Right ventricle myocardium inferior (tissue), 1 donor: ENCODE measurements at regions of chr17 and their contacts with region 1.

Region 1: DNA sequence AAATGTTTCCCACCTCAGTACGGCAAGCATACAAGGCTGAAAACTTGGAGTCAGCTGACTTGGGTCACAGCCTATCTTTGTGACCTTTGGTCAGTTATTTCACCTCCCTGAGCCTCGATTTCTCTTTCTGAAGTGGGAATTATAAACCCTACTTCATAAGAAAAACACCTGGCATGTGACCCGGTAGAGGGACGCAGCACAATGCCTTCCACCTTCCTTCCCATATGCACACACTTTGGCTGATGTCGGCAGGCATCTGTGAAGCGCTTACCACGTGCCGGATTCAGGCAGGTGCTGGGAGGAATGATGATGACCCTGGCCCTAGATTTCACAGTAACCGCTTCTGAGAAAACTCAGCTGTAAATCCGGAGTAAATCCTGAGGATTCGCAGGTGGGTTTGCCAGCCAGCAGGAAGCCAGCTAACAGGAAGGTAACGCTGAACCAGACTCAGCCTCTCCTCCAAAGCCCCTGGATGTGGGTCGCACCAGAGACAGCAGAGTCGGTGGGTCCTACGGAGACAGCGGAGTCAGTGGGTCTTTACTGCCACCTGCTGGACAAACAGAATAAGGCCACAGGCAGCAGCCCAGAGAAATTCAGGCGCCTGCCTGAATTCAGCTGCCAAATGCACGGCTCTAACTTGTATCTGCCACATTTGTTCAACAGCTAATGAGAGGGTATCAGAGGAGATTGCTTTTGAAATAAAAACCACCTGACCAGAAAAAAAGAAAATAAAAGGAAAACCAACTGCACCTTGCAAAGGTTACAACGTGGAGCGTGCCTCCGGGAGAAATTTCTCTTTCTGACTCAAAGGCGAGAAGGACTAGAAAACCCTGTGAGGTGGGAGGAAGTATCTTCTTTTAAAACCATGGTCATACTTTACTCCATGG is 16.6 kb downstream of the COPRS start:
- DNase-seq: peak; percentile 72
- ATAC-seq: peak; percentile 92

Region 2: GRCh38 chr17:31437720-31438420 is 404.6 kb before region 1 on chr17:
- intact Hi-C with region 1: loop called (anchors 5 kb)
- DNase-seq: no peak
- ATAC-seq: no peak

Region 3: GRCh38 chr17:31549525-31550388 is 292.7 kb before region 1 on chr17:
- intact Hi-C with region 1: loop called (anchors 2 kb)
- DNase-seq: peak; percentile 94
- ATAC-seq: peak; percentile 94

Region 4: DNA sequence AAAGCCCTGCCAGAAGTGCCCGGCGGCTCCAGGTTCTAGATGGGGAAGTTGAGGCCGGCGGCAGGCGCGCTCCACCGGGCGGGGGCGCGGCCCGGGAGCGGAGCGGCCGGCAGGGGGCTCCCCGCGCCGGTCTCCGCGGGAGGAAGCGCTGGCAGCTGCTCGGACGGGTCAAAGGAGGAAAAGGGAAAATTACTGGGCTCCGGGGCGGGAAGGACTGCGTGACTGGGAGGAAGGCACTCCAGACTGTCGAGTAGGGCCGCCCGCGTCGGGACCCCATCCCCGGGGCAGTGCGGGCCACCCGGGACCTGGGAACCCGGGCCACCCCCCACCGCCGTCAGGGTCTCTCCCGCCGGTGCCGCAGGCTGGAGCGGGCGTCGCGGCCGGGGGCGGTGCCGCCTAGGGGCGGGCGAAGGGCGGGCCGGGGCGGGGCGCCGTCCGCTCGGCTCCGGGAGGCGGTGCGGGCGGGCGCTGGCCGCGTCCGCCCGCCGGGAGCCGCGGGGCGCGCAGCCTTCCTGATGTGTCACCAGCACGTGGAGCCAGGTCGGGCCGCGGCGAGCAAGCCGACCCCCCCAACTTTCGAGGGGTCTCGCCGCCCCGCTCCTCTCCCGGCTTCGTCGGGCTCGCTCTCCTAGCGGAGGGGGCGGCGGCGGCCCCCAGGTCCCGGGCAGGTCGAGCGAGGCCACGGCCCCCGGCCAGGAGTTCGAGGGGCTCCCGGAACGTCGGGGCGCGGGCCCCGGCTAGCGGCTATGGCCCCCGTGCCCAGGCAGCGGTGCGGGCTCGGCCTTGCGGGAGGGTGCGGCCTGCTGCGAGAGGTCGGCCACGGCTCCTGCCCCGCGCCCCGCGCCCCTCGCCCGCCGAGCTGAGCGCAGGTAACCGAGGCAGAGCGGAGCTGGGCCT is 283.4 kb before region 1 on chr17:
- intact Hi-C with region 1: loop called (anchors 1 kb)
- DNase-seq: peak; percentile 90
- ATAC-seq: peak; percentile 90

Region 5: GRCh38 chr17:31696184-31696602 is 146.2 kb before region 1 on chr17:
- intact Hi-C with region 1: loop called (anchors 2 kb)
- DNase-seq: peak; percentile 92
- ATAC-seq: peak; percentile 95

Region 6: GRCh38 chr17:31738996-31739699 is 103.3 kb before region 1 on chr17:
- intact Hi-C with region 1: loop called (anchors 5 kb)
- DNase-seq: no peak
- ATAC-seq: peak; percentile 76

Region 7: DNA sequence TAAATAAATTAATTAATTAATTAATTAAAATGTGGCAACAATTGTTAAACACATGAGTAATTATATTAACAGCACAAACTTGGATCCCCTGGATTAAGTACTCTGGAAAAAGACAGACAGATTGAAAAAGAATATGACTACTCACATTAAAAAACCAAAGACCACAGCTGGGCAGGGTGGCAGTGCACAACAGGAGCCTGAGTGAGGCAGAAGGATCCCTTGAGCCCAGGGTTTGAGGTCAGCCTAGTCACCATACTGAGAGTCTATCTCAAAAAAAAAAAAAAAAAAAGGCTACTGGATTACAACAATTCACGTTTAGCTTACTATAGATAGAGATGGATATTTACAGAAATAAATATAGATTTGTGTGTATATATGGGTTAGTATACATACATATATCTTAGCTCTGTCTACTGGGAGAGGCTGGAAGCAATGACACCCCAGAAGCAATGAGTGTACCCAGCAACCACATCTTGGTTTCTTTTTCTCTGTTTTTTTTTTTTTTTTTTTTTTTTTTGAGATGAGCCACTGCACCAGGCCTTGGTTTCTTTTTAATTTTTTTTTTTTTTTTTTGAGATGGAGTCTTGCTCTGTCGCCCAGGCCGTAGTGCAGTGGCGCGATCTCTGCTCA is 83.8 kb after region 1 on chr17:
- intact Hi-C with region 1: no loop called
- DNase-seq: no peak
- ATAC-seq: no peak